ENCODE measurements at regions of chr12 and their contacts with region 1.

Region 1: DNA sequence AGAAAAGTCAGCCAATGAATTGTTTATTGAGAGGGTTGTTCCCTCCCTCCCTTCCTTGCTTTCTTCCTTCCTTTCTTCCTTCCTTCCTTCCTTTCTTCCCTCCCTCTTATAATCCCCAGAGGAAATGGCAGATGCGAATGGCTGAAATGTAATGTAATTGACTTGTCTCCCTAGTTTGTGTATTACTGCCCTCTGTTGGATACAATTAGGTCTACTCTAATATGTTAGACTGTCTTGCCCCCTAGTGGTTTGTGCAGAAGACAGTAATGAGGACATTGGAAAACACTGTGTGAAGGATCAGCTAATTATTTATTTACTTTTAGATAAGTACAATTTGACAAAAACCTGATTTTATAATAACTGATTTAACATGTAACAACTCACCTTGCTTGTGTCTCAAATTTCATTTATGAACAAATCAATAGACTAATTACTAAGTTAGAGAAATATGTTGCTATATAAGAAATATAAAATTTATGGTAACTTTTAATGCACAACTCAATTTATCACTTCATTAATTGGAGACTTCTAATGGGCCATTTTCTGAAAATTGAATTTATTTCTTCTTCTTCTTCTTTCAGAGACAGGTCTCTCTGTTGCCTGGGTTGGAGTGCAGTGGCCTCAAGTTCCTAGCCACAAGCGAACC is 229.8 kb upstream of the LRIG3 start:
- DNase-seq: peak; percentile 89
- H3K4me3 ChIP-seq: no peak overlapping the region
- H3K27ac ChIP-seq: no peak overlapping the region
- H3K4me1 ChIP-seq: peaks cover 19% of the 10 kb centered on the region
- H3K27me3 ChIP-seq: no peaks in the 10 kb centered on the region

Region 2: DNA sequence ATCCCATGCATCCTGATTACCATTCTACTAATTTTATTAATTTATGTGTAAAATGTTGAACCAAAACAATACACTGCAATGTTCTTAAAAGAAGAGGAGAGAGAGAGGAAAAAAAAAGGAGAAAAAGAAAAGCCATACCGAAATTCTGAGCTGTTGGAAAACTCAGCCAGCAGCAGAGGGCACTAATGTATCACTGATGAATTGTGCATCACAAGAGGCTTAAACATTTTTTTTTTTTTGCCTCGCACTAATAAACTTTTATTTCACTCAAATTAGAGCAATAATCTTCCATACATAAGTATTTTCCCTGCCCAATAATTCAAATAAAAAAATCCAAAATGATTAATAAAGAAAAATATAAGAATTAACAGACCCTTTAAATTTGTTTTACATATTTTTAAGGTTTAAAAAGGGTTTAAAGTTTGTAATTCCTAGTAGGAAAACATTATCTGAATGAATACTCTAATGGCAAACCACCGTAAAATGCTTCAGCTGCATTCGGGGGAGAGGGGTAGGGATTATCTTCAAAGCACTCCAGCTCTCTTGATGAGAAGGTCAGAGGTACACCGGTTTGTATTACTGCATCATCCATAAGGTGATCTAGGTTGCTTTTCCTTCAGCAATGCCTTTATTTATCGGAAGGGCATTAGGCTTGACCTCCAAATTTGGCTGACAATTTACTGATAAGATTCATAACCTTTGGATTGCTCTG is 1166.8 kb before region 1 on chr12:
- in situ Hi-C with region 1: loop called (anchors 25 kb)
- DNase-seq: peak; percentile 75
- H3K4me3 ChIP-seq: no peak overlapping the region
- H3K27ac ChIP-seq: no peak overlapping the region
- H3K4me1 ChIP-seq: peaks cover 6% of the 10 kb centered on the region; the same call in 1 of the 2 replicates
- H3K27me3 ChIP-seq: no peaks in the 10 kb centered on the region

Region 3: GRCh38 chr12:58346032-58346632 is 804.0 kb before region 1 on chr12:
- in situ Hi-C with region 1: loop called (anchors 10 kb)
- DNase-seq: peak; percentile 69
- H3K4me3 ChIP-seq: no peak overlapping the region
- H3K27ac ChIP-seq: no peak overlapping the region
- H3K4me1 ChIP-seq: peaks cover 16% of the 10 kb centered on the region; the same call in 1 of the 2 replicates
- H3K27me3 ChIP-seq: no peaks in the 10 kb centered on the region

Region 4: DNA sequence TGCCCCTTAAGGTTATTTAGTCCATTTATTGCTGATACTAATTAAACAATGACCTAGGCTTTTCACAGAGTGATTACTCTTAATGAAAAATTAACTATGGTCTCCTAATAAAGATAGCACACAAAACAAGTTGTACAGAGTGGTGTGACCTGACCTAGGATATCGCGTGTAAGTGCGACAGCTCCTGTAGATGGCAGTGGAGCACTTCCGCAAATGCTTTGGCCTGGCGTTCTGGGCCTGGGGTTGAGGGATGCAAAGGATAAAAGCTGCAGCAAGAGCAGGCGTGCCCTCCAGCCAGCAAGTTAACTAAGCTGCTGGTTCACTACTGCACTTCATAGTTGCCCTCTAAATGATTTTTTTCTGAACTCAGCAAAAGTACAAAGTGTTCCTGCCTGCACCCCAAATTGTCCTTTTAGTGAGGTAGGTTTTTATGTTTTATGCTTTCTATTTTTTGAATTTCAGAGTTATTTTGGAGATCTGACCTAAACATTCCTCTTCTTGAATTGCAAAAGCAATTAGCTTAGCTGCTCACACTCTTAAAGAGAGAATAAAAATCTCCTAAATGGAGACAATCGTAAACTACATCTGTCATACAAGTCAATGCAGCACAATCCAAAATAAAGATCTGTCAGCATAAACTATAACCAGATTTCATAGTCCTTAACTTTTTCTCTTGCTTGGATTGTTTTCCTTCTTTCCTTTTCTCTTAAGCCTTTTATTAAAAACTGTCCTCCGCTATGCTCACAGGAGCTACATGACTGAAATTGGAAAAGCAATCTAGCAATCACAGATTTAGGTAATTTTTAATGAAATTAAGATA is 609.4 kb before region 1 on chr12:
- in situ Hi-C with region 1: loop called (anchors 10 kb)
- DNase-seq: peak; percentile 89
- H3K4me3 ChIP-seq: peak overlapping the region; percentile 27; the same call in 1 of the 2 replicates
- H3K27ac ChIP-seq: peak overlapping the region; percentile 11
- H3K4me1 ChIP-seq: peaks cover 34% of the 10 kb centered on the region
- H3K27me3 ChIP-seq: no peaks in the 10 kb centered on the region

Region 5: DNA sequence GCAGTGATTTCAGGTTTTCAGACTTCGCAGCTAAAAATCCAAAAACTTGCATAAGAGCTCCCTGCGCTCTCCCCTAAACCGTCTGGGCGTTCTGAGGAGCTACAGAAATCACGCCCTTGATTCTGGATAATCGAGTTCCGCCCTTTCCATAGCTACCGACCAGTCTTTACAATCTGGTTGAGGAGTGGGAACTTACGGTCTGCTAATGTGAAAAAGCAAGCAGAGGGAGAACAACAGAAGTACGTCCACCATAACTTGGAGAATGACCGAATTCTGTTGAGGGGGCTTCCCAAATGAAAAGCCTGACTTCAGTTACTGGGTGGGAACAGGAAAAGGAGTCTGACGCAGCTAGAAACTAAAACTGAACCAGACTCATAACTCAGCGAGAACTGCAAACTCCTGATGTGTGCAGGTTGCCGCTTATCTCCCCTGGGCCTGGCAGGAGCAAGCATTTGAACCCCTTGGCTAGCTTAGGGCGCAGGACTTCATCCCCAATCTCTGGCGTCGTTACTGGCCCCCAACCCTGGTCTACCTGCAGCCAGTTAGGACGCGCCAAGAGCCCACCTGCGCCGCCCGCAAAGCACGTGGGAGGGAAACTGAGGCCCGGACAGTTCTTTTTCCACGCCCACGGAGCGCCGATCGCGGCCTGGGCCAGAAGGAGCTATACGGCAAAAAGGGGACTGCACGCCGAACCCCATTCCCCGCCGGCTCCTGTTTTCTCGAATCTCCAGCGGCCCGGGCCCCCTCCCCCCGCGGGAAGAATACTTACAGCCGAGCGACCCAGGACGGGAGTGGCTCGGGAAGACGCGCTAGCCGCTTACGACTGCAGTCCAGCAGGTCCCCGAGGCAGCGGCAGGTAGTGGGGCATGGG is 230.7 kb before region 1 on chr12:
- in situ Hi-C with region 1: loop called (anchors 10 kb)
- DNase-seq: peak; percentile 70
- H3K4me3 ChIP-seq: peak overlapping the region; percentile 95
- H3K27ac ChIP-seq: peak overlapping the region; percentile 81
- H3K4me1 ChIP-seq: peaks cover 34% of the 10 kb centered on the region
- H3K27me3 ChIP-seq: no peaks in the 10 kb centered on the region